Natural killer cell (primary cell): ENCODE measurements at regions of chr2 and their contacts with region 1.

Region 1: GRCh38 chr2:233251306-233252116 is at the start of gene ATG16L1:
- DNase-seq: peak; percentile 94 to 98
- ATAC-seq: peak; percentile 97 to 100 (median 98)
- H3K4me3 ChIP-seq: peak within 1 kb of the TSS; percentile 74
- H3K4me3 Mint-ChIP-seq: peak within 1 kb of the TSS; percentile 96
- H3K27ac ChIP-seq: peak within 1 kb of the TSS; percentile 73
- H3K27ac Mint-ChIP-seq: peak within 1 kb of the TSS; percentile 93 to 94
- H3K4me1 ChIP-seq: peaks cover 32% of the 10 kb centered on the region
- H3K4me1 Mint-ChIP-seq: peaks cover 45 to 56% of the 10 kb centered on the region in 2 donors
- H3K27me3 ChIP-seq: no peaks in the 10 kb centered on the region
- H3K27me3 Mint-ChIP-seq: no peaks in the 10 kb centered on the region
- CTCF ChIP-seq: peak; percentile 91
- total RNA-seq, gene ATG16L1: 106 to 142 (median 117) TPM

Region 2: DNA sequence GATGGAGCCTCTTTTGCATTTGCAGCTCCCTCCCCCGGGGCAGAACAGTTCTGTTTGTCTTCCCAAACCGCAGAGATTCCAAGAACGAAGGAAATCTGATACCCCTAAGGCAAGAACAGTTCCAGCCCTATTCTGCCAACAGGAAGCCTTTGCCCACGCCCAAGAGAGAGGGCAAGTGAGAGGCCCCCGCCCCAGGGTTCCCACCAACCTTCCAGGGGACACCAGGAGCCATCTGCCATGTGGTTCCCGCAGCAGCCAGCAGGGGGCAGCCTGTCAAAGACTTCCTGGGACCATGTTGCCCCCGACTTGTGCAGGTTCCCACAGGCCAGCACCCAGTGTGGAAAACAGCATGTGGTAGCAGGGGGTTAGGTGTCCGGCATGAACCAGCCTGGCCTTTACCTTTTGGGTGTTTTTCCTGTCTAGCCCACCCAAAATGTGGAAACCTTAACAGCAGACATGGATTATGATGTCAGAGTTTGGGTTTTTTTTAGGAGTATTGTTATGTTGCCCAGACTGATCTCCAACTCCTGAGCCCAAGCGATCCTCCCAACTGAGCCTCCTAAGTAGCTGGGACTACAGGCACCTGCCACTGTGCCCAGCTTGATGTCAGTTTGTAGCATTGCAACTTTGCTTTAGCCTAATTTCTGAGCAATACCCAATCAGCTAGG is 639.8 kb before region 1 on chr2:
- intact Hi-C with region 1: loop called (anchors 1 kb)
- DNase-seq: peak; percentile 64 to 77
- ATAC-seq: peak; percentile 62 to 86 (median 77)
- H3K4me3 ChIP-seq: no peak overlapping the region
- H3K4me3 Mint-ChIP-seq: no peak overlapping the region
- H3K27ac ChIP-seq: no peak overlapping the region
- H3K27ac Mint-ChIP-seq: no peak overlapping the region
- H3K4me1 ChIP-seq: no peaks in the 10 kb centered on the region
- H3K4me1 Mint-ChIP-seq: no peaks in the 10 kb centered on the region
- H3K27me3 ChIP-seq: no peaks in the 10 kb centered on the region
- H3K27me3 Mint-ChIP-seq: peaks cover 0 to 2% of the 10 kb centered on the region in 2 donors
- CTCF ChIP-seq: peak; percentile 83

Region 3: DNA sequence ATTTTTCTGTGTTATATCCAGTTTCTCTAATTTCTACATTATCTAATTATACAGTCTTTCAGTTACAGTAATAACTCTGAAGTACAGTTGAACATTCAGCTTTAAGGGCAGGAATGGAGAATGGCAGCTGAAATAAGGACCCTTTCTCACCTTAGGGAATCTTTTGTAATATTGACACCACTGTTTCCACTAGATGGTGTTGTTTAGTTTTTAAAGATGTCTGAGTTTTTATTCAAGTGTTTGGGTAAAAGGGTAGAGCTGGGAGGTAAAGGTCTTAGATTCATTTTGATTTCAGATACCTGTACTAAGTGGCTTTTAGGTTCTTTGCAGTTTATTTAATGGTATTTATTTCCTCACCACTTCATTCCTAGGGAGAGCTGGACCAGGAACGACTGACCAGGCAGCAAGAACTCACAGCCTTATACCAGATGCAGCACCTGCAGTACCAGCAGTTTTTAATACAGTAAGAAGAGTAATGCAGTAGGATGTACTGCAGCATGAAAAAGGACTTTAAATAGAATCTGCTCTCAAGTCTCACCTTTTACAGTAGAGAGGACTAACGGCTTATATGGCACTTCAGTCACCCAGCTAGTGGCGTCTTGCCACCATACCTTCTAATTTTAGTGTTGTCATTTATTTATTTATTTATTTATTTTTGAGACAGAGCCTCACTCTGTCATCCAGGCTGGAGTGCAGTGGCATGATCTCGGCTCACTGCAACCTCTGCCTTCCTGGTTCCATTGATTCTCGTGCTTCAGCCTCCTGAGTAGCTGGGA is 442.0 kb before region 1 on chr2:
- intact Hi-C with region 1: loop called (anchors 2 kb)
- DNase-seq: peak in 1 of 2 donors; percentile 9
- ATAC-seq: no peak
- H3K4me3 ChIP-seq: no peak overlapping the region
- H3K4me3 Mint-ChIP-seq: no peak overlapping the region
- H3K27ac ChIP-seq: no peak overlapping the region
- H3K27ac Mint-ChIP-seq: no peak overlapping the region
- H3K4me1 ChIP-seq: no peaks in the 10 kb centered on the region
- H3K4me1 Mint-ChIP-seq: no peaks in the 10 kb centered on the region
- H3K27me3 ChIP-seq: no peaks in the 10 kb centered on the region
- H3K27me3 Mint-ChIP-seq: no peaks in the 10 kb centered on the region
- CTCF ChIP-seq: no peak

Region 4: DNA sequence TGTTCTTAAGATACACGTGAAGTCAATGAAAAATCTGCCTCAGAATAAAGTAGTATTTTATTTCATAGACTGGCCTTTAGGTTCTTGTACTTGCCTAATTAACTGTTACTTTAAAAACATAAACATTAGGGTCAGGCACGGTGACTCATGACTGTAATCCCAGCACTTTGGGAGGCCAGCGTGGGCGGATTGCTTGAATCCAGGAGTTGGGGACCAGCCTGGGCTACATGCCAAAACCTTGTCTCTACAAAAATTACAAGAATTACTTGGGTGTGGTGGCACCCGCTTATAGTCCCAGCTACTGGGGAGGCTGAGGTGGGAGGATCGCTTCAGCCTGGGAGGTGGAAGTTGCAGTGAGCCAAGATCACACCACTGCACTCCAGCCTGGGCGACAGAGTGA is 397.4 kb before region 1 on chr2:
- intact Hi-C with region 1: loop called (anchors 1 kb)
- DNase-seq: no peak
- ATAC-seq: no peak
- H3K4me3 ChIP-seq: no peak overlapping the region
- H3K4me3 Mint-ChIP-seq: no peak overlapping the region
- H3K27ac ChIP-seq: no peak overlapping the region
- H3K27ac Mint-ChIP-seq: peak overlapping the region in 1 of 2 donors; percentile 73
- H3K4me1 ChIP-seq: no peaks in the 10 kb centered on the region
- H3K4me1 Mint-ChIP-seq: peaks cover 3 to 5% of the 10 kb centered on the region in 2 donors
- H3K27me3 ChIP-seq: no peaks in the 10 kb centered on the region
- H3K27me3 Mint-ChIP-seq: no peaks in the 10 kb centered on the region
- CTCF ChIP-seq: no peak

Region 5: GRCh38 chr2:233338046-233338445 is 86.5 kb after region 1 on chr2:
- intact Hi-C with region 1: no loop called
- DNase-seq: no peak
- ATAC-seq: no peak
- H3K4me3 ChIP-seq: no peak overlapping the region
- H3K4me3 Mint-ChIP-seq: no peak overlapping the region
- H3K27ac ChIP-seq: no peak overlapping the region
- H3K27ac Mint-ChIP-seq: no peak overlapping the region
- H3K4me1 ChIP-seq: peaks cover 29% of the 10 kb centered on the region
- H3K4me1 Mint-ChIP-seq: peaks cover 32% of the 10 kb centered on the region in 2 donors
- H3K27me3 ChIP-seq: no peaks in the 10 kb centered on the region
- H3K27me3 Mint-ChIP-seq: no peaks in the 10 kb centered on the region
- CTCF ChIP-seq: no peak